ENCODE measurements at regions of chr2 and their contacts with region 1.

Region 1: GRCh38 chr2:118003396-118003824 is 10.5 kb downstream of the CCDC93 start:
- DNase-seq: peak; percentile 82
- ATAC-seq: peak; percentile 99
- H3K4me3 ChIP-seq: no peak overlapping the region
- H3K27ac ChIP-seq: no peak overlapping the region
- H3K4me1 ChIP-seq: no peaks in the 10 kb centered on the region
- H3K27me3 ChIP-seq: no peaks in the 10 kb centered on the region
- CTCF ChIP-seq: peak; percentile 94
- EP300 ChIP-seq: no peak
- POLR2A ChIP-seq: no peak
- RAD21 ChIP-seq: peak; percentile 61

Region 2: DNA sequence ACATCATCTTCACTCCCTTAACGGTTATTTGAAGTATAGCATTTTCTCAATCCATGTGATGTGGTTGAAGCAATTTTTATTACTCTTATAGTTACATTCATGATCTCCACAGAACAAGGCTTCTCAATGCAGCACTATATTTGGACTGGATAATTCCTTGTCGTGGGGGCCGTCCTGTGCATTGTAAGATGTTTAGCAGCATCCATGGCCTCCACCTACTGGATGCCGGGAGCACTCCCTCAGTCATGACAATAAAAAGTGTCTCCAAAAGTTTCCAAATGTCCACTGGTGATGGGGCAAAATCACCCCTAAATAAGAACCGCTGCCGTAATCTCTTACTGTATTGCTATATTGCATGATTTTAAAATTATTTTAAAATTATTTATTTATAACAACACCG is 299.6 kb before region 1 on chr2:
- CTCF ChIA-PET with region 1: no interaction called
- POLR2A ChIA-PET with region 1: no interaction called
- in situ Hi-C with region 1: no loop called
- intact Hi-C with region 1: no loop called
- DNase-seq: no peak
- ATAC-seq: no peak
- H3K4me3 ChIP-seq: no peak overlapping the region
- H3K27ac ChIP-seq: no peak overlapping the region
- H3K4me1 ChIP-seq: no peaks in the 10 kb centered on the region
- H3K27me3 ChIP-seq: peaks cover 0 to 4% of the 10 kb centered on the region in 2 experiments; a peak in 1 of 5 replicates
- CTCF ChIP-seq: no peak
- EP300 ChIP-seq: no peak
- POLR2A ChIP-seq: no peak
- RAD21 ChIP-seq: no peak

Region 3: DNA sequence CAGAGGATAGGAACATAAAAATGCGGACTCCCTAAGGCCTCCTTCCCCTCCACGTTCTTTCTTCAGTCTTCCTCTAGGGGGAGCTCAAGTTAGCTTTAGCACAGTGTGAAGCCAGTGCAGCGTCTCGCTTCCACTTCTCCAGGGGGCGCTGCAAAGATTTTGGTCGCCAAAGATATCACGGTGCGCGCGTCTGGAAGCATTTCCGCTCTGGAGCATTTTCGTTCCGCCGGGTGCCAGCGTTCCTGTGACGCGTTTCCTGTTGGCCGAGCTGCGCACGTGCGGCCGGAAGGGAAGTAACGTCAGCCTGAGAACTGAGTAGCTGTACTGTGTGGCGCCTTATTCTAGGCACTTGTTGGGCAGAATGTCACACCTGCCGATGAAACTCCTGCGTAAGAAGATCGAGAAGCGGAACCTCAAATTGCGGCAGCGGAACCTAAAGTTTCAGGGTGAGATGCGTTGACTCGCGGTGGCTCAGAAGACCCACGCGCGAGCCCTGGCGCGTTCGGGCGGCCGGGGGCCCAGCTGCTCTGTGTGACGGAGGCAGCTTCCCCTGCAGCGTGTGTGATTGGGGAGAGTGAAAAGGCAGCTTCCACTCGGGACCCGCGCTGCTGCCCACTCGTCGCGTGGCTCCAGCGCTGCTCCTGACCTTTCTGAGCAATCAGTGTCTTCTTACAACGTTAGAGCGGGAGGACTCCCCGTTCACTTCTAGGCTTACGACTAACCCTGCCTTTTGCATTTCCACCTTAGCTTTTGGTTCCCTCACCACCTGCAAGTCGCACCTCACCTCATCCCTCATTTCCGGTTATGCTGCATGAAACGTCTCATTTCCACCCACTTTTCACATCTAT is 188.8 kb before region 1 on chr2 and contains the start of gene DDX18:
- CTCF ChIA-PET with region 1: interaction called, 36 read pairs
- POLR2A ChIA-PET with region 1: interaction called, 5 read pairs
- in situ Hi-C with region 1: no loop called
- intact Hi-C with region 1: loop called (anchors 1 kb)
- DNase-seq: peak; percentile 99
- ATAC-seq: peak; percentile 98
- H3K4me3 ChIP-seq: peak within 1 kb of the TSS; percentile 85 to 96 (median 90)
- H3K27ac ChIP-seq: peak within 1 kb of the TSS; percentile 80
- H3K4me1 ChIP-seq: peaks cover 31% of the 10 kb centered on the region
- H3K27me3 ChIP-seq: no peaks in the 10 kb centered on the region; a peak in 1 of 5 replicates
- CTCF ChIP-seq: peak; percentile 100
- EP300 ChIP-seq: peak; percentile 9 to 60; a peak in 2 of 4 replicates
- POLR2A ChIP-seq: peak; percentile 91 to 95
- RAD21 ChIP-seq: peak; percentile 89
- total RNA-seq, gene DDX18: 134 and 234 TPM in 2 replicates

Region 4: GRCh38 chr2:117820444-117820843 is 183.0 kb before region 1 on chr2:
- CTCF ChIA-PET with region 1: no interaction called
- POLR2A ChIA-PET with region 1: no interaction called
- in situ Hi-C with region 1: loop called (anchors 5 kb)
- intact Hi-C with region 1: no loop called
- DNase-seq: no peak
- ATAC-seq: no peak
- H3K4me3 ChIP-seq: no peak overlapping the region
- H3K27ac ChIP-seq: no peak overlapping the region
- H3K4me1 ChIP-seq: peaks cover 31% of the 10 kb centered on the region
- H3K27me3 ChIP-seq: no peaks in the 10 kb centered on the region
- CTCF ChIP-seq: no peak
- EP300 ChIP-seq: no peak
- POLR2A ChIP-seq: no peak
- RAD21 ChIP-seq: no peak

Region 5: DNA sequence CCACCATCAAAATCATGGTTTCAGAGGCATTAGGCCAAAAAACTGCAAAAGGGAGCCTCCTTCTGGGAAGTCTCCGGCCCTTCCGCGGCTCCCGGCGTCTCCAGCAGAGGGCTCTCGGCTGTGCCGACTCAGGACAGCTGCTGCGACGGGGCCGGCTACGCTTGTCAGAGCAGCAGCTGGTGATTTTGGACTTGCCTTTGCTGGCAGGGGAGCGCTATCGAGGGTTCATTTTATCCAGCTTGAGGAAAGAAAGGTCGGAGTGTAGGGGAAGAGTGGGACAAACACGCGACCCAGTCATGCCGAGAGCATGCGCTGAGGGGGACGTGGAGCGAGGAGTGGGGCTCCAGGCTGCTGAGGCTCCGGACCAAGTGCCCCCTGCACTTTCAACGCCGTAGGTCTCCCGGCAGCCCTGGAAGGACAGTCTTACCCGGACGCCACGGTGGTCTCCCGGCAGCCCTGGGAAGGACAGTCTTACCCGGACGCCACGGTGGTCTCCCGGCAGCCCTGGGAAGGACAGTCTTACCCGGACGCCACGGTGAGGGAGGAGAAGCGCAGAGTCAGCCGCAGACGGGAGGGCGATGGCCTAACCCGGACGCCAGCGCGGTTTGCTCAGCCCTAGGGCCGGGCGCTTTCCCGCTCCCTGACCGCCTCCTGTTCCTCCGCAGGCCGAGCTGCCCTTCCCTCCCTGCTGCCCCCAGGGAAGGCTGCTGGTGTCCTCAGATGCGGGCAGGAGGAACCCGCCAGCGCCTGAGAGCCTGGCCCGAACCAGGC is 167.2 kb before region 1 on chr2:
- CTCF ChIA-PET with region 1: interaction called, 8 read pairs
- POLR2A ChIA-PET with region 1: no interaction called
- in situ Hi-C with region 1: no loop called
- intact Hi-C with region 1: loop called (anchors 1 kb)
- DNase-seq: peak; percentile 54
- ATAC-seq: peak; percentile 92
- H3K4me3 ChIP-seq: peak overlapping the region in 2 of 3 experiments; percentile 19 to 62; a peak in 3 of 6 replicates
- H3K27ac ChIP-seq: no peak overlapping the region
- H3K4me1 ChIP-seq: no peaks in the 10 kb centered on the region
- H3K27me3 ChIP-seq: no peaks in the 10 kb centered on the region
- CTCF ChIP-seq: peak; percentile 80
- EP300 ChIP-seq: no peak
- POLR2A ChIP-seq: no peak; a peak in 1 of 4 replicates
- RAD21 ChIP-seq: peak; percentile 80

Region 6: GRCh38 chr2:117956036-117956796 is 47.2 kb before region 1 on chr2:
- CTCF ChIA-PET with region 1: no interaction called
- POLR2A ChIA-PET with region 1: no interaction called
- in situ Hi-C with region 1: no loop called
- intact Hi-C with region 1: loop called (anchors 2 kb)
- DNase-seq: no peak
- ATAC-seq: no peak; the same call in 2 of the 3 replicates
- H3K4me3 ChIP-seq: no peak overlapping the region
- H3K27ac ChIP-seq: no peak overlapping the region
- H3K4me1 ChIP-seq: peaks cover 9% of the 10 kb centered on the region; the same call in 1 of the 2 replicates
- H3K27me3 ChIP-seq: no peaks in the 10 kb centered on the region
- CTCF ChIP-seq: no peak
- EP300 ChIP-seq: no peak
- POLR2A ChIP-seq: no peak
- RAD21 ChIP-seq: no peak

Region 7: DNA sequence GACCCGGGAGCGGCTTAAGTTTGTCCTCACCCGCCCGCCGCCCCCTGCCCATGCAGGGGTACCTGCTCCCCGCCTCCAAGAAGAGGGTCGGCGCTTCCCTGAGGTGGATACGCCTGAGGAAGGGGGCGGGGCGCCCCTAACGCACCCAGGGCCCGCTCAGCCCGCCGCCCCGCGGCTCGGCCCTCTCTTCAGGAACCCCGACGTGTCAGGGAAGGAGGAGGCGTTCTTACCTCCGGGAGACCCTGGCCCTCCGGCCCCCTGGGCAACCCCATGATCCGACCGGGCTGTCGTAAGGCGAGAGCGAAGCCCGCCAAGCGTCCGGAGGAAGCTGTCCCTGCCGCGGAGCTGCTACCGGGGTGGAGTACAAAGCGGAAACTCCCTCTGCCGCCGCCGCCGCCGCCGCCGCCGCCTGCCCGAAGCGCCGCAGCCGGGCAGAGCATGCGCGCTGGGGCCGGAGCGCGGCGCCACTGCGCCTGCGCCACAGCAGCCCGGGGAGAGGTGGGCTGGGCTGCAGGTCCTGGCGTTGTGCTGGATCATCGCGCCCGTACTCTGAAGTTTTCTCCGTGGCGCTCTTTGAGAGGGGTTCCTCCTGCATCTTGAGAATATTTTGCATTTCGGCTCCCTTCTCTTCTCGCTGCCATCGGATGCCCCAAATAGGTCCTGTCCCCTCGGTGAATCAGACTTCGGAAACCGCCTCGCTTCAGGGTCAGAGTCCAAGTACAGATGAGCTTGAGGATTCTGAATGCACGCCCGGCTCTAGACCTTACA is 10.5 kb after region 1 on chr2 and contains the start of gene CCDC93:
- CTCF ChIA-PET with region 1: interaction called, 3 read pairs
- POLR2A ChIA-PET with region 1: interaction called, 11 read pairs
- in situ Hi-C with region 1: no loop called
- intact Hi-C with region 1: loop called (anchors 1 kb)
- DNase-seq: peak; percentile 72
- ATAC-seq: peak; percentile 90
- H3K4me3 ChIP-seq: peak within 1 kb of the TSS; percentile 73 to 99 (median 96)
- H3K27ac ChIP-seq: peak within 1 kb of the TSS; percentile 75
- H3K4me1 ChIP-seq: peaks cover 29% of the 10 kb centered on the region
- H3K27me3 ChIP-seq: no peaks in the 10 kb centered on the region; a peak in 1 of 5 replicates
- CTCF ChIP-seq: 0 out of 2 replicates have a peak, but pooled peaks have one; percentile 1
- EP300 ChIP-seq: peak in 1 of 2 experiments; percentile 15; a peak in 1 of 4 replicates
- POLR2A ChIP-seq: peak; percentile 72 to 95
- RAD21 ChIP-seq: peak; percentile 4; the same call in 1 of the 2 replicates
- total RNA-seq, gene CCDC93: 28.7 and 37.2 TPM in 2 replicates

Measured in HepG2 (cell line).